PC-3 (cell line): ENCODE measurements at regions of chr2 and their contacts with region 1.

Region 1: GRCh38 chr2:187499941-187500532 is 52.0 kb upstream of the CALCRL start:
- DNase-seq: peak; percentile 85
- ATAC-seq: peak; percentile 18; the same call in 1 of the 2 replicates
- H3K4me3 ChIP-seq: no peak overlapping the region
- H3K27ac ChIP-seq: peak overlapping the region; percentile 95
- H3K4me1 ChIP-seq: peaks cover 41% of the 10 kb centered on the region
- H3K27me3 ChIP-seq: no peaks in the 10 kb centered on the region
- CTCF ChIP-seq: peak; percentile 80

Region 2: GRCh38 chr2:187397886-187398285 is 102.2 kb before region 1 on chr2:
- CTCF ChIA-PET with region 1: no interaction called
- POLR2A ChIA-PET with region 1: no interaction called
- intact Hi-C with region 1: no loop called
- DNase-seq: no peak
- ATAC-seq: no peak
- H3K4me3 ChIP-seq: no peak overlapping the region
- H3K27ac ChIP-seq: no peak overlapping the region
- H3K4me1 ChIP-seq: no peaks in the 10 kb centered on the region
- H3K27me3 ChIP-seq: peaks cover 5% of the 10 kb centered on the region; the same call in 1 of the 2 replicates
- CTCF ChIP-seq: no peak

Region 3: DNA sequence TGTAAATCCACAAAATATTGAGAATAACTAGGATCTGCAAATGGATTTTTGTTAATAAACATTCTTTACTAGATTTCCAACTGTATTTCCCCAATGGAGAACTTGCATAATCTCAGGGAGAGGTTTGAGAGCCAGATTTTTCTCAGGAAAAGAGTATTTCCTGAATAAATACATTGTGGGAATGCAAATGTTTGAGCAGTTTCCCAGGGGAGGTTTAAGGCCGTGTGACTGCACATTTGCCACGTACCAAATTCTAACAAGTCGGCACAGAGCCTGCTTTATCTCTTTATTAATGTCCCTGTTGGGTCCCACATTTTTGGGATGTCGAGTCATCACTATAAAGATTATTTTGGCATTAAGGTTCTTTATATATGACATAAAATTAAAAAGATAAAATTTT is 27.2 kb after region 1 on chr2:
- CTCF ChIA-PET with region 1: interaction called, 6 read pairs
- POLR2A ChIA-PET with region 1: no interaction called
- intact Hi-C with region 1: loop called (anchors 1 kb)
- DNase-seq: peak; percentile 83
- ATAC-seq: peak; percentile 52
- H3K4me3 ChIP-seq: peak overlapping the region; percentile 3; the same call in 1 of the 2 replicates
- H3K27ac ChIP-seq: peak overlapping the region; percentile 96
- H3K4me1 ChIP-seq: peaks cover 52% of the 10 kb centered on the region
- H3K27me3 ChIP-seq: no peaks in the 10 kb centered on the region
- CTCF ChIP-seq: no peak

Region 4: DNA sequence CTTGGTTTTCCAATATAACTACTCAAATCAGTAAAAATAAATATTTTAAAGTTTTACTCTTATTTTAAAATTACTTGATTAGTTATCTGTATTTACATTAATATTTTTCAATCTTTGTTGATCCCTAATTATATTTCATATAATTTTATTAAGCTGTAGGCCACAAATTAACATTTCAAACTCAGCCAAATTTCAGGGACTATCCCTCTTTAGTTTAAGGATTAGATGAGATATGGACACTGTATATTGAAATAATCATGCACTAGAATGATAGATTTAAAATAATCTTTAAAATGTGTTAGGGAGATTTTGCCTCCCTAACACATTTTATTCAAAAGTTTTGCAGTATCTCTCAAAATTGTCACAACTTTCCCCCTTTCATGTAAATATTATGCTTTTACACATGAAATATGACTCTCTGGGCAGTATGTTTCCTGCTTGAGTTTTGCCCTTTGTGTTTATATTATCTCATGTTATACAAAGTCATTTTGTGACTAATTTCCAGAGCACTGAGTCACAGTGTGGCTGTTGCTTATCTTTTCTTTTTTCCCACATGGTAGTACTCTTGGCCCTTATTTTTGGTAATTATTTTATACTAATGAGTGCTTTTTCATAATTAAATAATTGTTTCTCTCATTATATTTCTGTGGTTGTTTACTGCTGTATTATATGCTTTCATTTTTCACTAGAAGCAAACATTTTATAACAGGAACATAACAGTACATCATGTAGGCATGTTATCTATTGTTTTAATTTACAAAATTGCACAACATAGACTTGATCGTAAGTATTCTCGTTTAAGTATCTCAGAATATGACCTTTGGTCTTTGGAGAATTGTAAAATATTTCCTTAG is 53.0 kb after region 1 on chr2:
- CTCF ChIA-PET with region 1: interaction called, 5 read pairs
- POLR2A ChIA-PET with region 1: no interaction called
- intact Hi-C with region 1: loop called (anchors 2 kb)
- DNase-seq: peak; percentile 86
- ATAC-seq: peak; percentile 89
- H3K4me3 ChIP-seq: peak overlapping the region; percentile 65
- H3K27ac ChIP-seq: peak overlapping the region; percentile 94
- H3K4me1 ChIP-seq: peaks cover 58% of the 10 kb centered on the region
- H3K27me3 ChIP-seq: no peaks in the 10 kb centered on the region
- CTCF ChIP-seq: no peak

Region 5: GRCh38 chr2:187581125-187581896 is 81.3 kb after region 1 on chr2:
- CTCF ChIA-PET with region 1: interaction called, 37 read pairs
- POLR2A ChIA-PET with region 1: no interaction called
- intact Hi-C with region 1: loop called (anchors 1 kb)
- DNase-seq: peak; percentile 75
- ATAC-seq: peak; percentile 37
- H3K4me3 ChIP-seq: peak overlapping the region; percentile 35
- H3K27ac ChIP-seq: peak overlapping the region; percentile 72
- H3K4me1 ChIP-seq: peaks cover 23% of the 10 kb centered on the region
- H3K27me3 ChIP-seq: no peaks in the 10 kb centered on the region
- CTCF ChIP-seq: peak; percentile 82

Region 6: GRCh38 chr2:187842978-187843847 is 343.2 kb after region 1 on chr2:
- CTCF ChIA-PET with region 1: interaction called, 5 read pairs
- POLR2A ChIA-PET with region 1: no interaction called
- intact Hi-C with region 1: loop called (anchors 1 kb)
- DNase-seq: peak; percentile 86
- ATAC-seq: peak; percentile 79
- H3K4me3 ChIP-seq: no peak overlapping the region
- H3K27ac ChIP-seq: no peak overlapping the region
- H3K4me1 ChIP-seq: no peaks in the 10 kb centered on the region
- H3K27me3 ChIP-seq: no peaks in the 10 kb centered on the region
- CTCF ChIP-seq: peak; percentile 79

Region 7: GRCh38 chr2:188512456-188512855 is 1012.4 kb after region 1 on chr2:
- CTCF ChIA-PET with region 1: no interaction called
- POLR2A ChIA-PET with region 1: no interaction called
- intact Hi-C with region 1: loop called (anchors 2 kb)
- DNase-seq: peak; percentile 65
- ATAC-seq: peak; percentile 71
- H3K4me3 ChIP-seq: no peak overlapping the region
- H3K27ac ChIP-seq: no peak overlapping the region
- H3K4me1 ChIP-seq: no peaks in the 10 kb centered on the region
- H3K27me3 ChIP-seq: no peaks in the 10 kb centered on the region
- CTCF ChIP-seq: peak; percentile 82